ENCODE measurements at regions of chr3 and their contacts with region 1.

Region 1: DNA sequence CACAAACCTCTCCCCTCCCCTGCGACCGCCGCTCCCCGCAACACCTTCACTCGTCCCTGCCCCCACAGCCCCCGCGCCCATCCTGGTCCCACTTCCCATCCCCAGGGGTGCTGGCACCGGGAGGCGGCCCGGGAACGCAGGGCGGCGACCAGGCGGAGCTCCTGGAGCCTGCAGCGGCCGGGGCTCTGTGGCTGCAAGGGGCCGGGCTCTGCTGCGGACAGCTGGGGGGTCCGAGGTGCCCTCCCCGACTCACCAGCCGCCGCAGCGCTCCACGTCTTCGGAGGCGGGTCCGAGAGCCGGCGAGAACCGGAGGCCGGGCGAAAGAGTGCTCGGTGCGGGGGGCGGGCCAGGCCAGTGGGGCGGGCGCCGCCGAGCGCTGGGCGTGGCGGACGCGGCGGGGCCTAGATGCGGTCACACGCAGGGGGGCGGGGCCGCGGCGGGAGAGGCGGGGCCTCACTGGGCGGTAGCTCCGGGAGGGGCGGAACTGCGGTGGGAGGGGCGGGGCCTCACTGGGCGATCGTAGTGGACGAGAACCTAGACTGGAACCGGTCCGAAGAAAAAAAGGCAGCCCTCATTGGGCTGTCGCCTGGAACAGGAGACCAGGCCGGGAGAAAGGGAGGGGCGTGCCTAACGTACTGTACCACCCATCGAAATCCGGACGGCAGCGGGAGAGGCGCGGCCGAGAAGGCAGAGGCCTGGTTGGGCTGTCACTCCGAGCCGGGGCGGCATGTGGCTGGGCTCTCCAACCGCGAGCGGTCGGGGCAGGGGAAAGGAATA is at the start of gene ANO10:
- DNase-seq: peak; percentile 99 to 100
- ATAC-seq: peak; percentile 91
- total RNA-seq, gene ANO10: 82.0 to 85.3 TPM

Region 2: GRCh38 chr3:43542328-43543043 is 79.4 kb before region 1 on chr3:
- intact Hi-C with region 1: no loop called
- DNase-seq: no peak
- ATAC-seq: peak; percentile 48

Region 3: GRCh38 chr3:43690400-43691119 is 68.7 kb after region 1 on chr3 and contains the start of gene ABHD5:
- intact Hi-C with region 1: loop called in 1 of 2 experiments (anchors 5 kb)
- DNase-seq: peak; percentile 89 to 92
- ATAC-seq: peak; percentile 83
- total RNA-seq, gene ABHD5: 23.9 to 39.0 TPM

Region 4: DNA sequence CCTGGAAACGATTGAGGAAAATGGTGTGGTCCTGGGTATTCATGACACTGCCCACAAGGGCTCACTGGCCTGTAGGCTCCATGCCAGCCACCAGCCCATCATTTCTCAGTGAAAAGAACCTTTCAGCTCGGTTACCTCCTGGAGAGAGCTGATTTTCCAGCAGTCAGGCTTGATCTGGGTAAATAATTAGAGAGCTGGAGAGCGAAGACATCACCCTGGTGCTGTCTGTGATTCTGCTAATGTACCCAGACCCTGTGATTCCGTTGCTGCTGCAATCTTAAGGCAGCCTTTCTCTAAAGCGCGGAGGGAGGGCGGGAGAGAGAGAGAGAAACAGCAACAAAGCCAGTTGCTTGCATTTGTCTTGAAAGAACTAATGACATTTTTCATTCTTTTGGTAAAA is 397.9 kb after region 1 on chr3:
- intact Hi-C with region 1: no loop called
- DNase-seq: no peak
- ATAC-seq: no peak